IMR-90 (cell line): ENCODE measurements at regions of chr16 and their contacts with region 1.

Region 1: GRCh38 chr16:79601931-79602627 is 1.5 kb upstream of the MAF start:
- DNase-seq: peak; percentile 38
- ATAC-seq: no peak
- H3K4me3 ChIP-seq: no peak overlapping the region
- H3K27ac ChIP-seq: no peak overlapping the region
- H3K4me1 ChIP-seq: no peaks in the 10 kb centered on the region
- H3K27me3 ChIP-seq: peaks cover 19% of the 10 kb centered on the region
- CTCF ChIP-seq: peak; percentile 57
- POLR2A ChIP-seq: no peak
- RAD21 ChIP-seq: peak; percentile 58

Region 2: GRCh38 chr16:78122774-78123315 is 1479.2 kb before region 1 on chr16:
- CTCF ChIA-PET with region 1: interaction called, 3 read pairs
- POLR2A ChIA-PET with region 1: no interaction called
- dilution Hi-C with region 1: no loop called
- in situ Hi-C with region 1: loop called (anchors 10 kb)
- intact Hi-C with region 1: loop called (anchors 2 kb)
- DNase-seq: peak; percentile 53
- ATAC-seq: peak; percentile 92
- H3K4me3 ChIP-seq: no peak overlapping the region
- H3K27ac ChIP-seq: peak overlapping the region; percentile 29; the same call in 1 of the 2 replicates
- H3K4me1 ChIP-seq: peaks cover 4% of the 10 kb centered on the region; the same call in 1 of the 2 replicates
- H3K27me3 ChIP-seq: no peaks in the 10 kb centered on the region
- CTCF ChIP-seq: peak; percentile 61
- POLR2A ChIP-seq: no peak
- RAD21 ChIP-seq: peak; percentile 65

Region 3: DNA sequence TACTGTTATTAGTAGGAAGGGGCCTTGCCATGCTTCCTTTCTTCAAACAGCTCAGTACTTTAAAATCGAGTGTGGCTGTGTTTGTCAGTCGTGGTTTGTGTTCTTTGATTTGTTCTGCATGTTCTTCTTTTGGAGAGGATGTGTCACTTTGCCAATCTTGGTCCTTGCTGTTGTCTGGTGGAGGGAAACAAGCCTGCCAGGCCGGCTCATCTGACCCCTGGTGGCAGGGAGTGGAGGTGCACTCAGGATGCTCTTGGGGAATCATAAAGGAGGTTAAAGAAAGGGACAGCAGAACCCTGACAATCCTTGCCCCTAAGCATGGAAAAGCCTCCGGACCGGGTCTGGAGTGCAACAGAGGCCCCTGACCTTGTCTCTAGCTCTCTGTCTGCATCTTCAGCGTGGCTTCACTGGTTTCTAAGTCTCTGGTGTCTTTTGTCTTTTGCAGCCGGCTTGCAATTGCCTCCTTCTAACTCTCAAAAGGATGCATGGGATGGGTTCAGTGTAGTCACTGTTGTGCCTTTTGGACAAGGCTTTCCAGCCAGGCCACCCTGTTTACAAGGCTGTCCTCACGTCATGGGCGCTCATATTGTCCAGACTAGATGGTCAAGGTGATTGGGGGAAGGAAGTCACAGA is 1366.8 kb before region 1 on chr16:
- CTCF ChIA-PET with region 1: no interaction called
- POLR2A ChIA-PET with region 1: no interaction called
- dilution Hi-C with region 1: no loop called
- in situ Hi-C with region 1: no loop called
- intact Hi-C with region 1: loop called (anchors 10 kb)
- DNase-seq: peak; percentile 57
- ATAC-seq: peak; percentile 95
- H3K4me3 ChIP-seq: no peak overlapping the region
- H3K27ac ChIP-seq: no peak overlapping the region
- H3K4me1 ChIP-seq: no peaks in the 10 kb centered on the region; the same call in 1 of the 2 replicates
- H3K27me3 ChIP-seq: no peaks in the 10 kb centered on the region; the same call in 1 of the 2 replicates
- CTCF ChIP-seq: peak; percentile 74
- POLR2A ChIP-seq: no peak
- RAD21 ChIP-seq: peak; percentile 58

Region 4: GRCh38 chr16:79863128-79864031 is 261.3 kb after region 1 on chr16:
- CTCF ChIA-PET with region 1: no interaction called
- POLR2A ChIA-PET with region 1: no interaction called
- dilution Hi-C with region 1: no loop called
- in situ Hi-C with region 1: no loop called
- intact Hi-C with region 1: no loop called
- DNase-seq: no peak
- ATAC-seq: no peak
- H3K4me3 ChIP-seq: no peak overlapping the region
- H3K27ac ChIP-seq: no peak overlapping the region
- H3K4me1 ChIP-seq: no peaks in the 10 kb centered on the region
- H3K27me3 ChIP-seq: no peaks in the 10 kb centered on the region
- CTCF ChIP-seq: no peak
- POLR2A ChIP-seq: no peak
- RAD21 ChIP-seq: no peak

Region 5: DNA sequence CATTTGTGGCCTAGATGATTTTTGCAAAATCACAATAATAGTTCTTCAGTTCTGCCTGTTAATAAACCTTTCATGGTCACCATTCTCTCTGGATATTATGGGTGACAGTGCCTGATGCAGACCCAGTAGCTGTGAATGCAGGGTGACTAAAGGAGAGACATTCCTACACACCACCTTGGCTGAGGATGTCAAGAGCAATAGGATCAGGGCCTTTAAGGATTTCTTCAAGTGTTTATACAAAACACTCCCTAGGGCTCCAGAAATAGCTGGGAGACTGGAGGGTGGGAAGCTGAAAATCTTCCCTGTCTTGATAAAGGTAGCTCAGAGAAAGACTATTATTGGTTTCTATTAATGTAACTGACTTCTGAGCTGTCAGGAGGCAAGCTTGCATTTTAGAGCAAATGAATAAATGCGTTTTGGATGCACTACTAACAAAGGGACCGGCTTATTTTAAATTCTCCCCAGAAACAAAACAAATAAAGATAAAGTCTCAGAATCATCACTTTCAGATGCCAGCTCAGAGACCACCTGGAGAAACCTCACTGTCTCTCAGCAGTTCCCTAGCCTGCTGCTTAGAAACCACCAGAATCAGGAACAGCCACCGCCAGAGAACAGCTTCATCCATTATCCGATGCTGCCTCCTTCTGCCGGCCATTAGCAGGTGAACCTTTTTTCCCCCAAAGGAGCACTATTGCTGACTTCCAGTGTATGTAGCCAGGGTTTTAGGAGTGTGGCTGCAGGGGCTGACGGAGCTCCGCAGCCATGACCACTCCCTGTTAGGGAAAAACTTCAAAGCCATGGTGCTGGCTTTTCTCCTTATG is 767.3 kb after region 1 on chr16:
- CTCF ChIA-PET with region 1: interaction called, 8 read pairs
- POLR2A ChIA-PET with region 1: no interaction called
- dilution Hi-C with region 1: no loop called
- in situ Hi-C with region 1: no loop called
- intact Hi-C with region 1: loop called (anchors 5 kb)
- DNase-seq: peak; percentile 60
- ATAC-seq: peak; percentile 98
- H3K4me3 ChIP-seq: no peak overlapping the region
- H3K27ac ChIP-seq: no peak overlapping the region
- H3K4me1 ChIP-seq: no peaks in the 10 kb centered on the region
- H3K27me3 ChIP-seq: no peaks in the 10 kb centered on the region
- CTCF ChIP-seq: peak; percentile 86
- POLR2A ChIP-seq: 0 out of 2 replicates have a peak, but pooled peaks have one; percentile 24
- RAD21 ChIP-seq: peak; percentile 98

Region 6: DNA sequence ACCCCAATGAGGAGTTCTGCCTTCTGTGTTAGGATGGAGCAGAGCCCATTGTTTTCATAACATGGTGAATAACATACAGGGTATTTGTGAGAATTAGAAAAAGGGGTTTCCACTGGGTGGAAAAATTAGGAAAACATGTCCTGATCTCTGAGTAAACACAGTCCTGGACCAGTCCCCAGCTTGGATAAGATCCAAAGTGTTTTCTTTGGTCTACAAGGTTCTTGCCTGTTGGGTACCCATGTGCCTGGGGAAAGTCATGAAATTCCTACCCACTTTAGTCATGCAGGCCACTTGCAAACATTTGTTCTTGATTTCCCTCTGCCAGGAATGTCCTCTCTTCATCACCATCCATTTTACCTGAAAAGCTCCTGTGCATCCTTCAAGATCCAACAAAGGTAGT is 773.9 kb after region 1 on chr16:
- CTCF ChIA-PET with region 1: interaction called, 11 read pairs
- POLR2A ChIA-PET with region 1: no interaction called
- dilution Hi-C with region 1: no loop called
- in situ Hi-C with region 1: no loop called
- intact Hi-C with region 1: no loop called
- DNase-seq: no peak
- ATAC-seq: no peak
- H3K4me3 ChIP-seq: no peak overlapping the region
- H3K27ac ChIP-seq: no peak overlapping the region
- H3K4me1 ChIP-seq: no peaks in the 10 kb centered on the region
- H3K27me3 ChIP-seq: no peaks in the 10 kb centered on the region
- CTCF ChIP-seq: no peak
- POLR2A ChIP-seq: no peak
- RAD21 ChIP-seq: no peak